ENCODE measurements at regions of chr1 and their contacts with region 1.

Region 1: GRCh38 chr1:28648474-28649198 is at the start of gene RNU11:
- DNase-seq: peak; percentile 72
- ATAC-seq: peak; percentile 65
- H3K4me3 Mint-ChIP-seq: peak within 1 kb of the TSS; percentile 91
- H3K27ac Mint-ChIP-seq: peak within 1 kb of the TSS; percentile 100
- H3K4me1 Mint-ChIP-seq: peaks cover 35% of the 10 kb centered on the region
- H3K27me3 Mint-ChIP-seq: no peaks in the 10 kb centered on the region
- CTCF ChIP-seq: no peak
- total RNA-seq, gene RNU11: not detected in 2 replicates

Region 2: DNA sequence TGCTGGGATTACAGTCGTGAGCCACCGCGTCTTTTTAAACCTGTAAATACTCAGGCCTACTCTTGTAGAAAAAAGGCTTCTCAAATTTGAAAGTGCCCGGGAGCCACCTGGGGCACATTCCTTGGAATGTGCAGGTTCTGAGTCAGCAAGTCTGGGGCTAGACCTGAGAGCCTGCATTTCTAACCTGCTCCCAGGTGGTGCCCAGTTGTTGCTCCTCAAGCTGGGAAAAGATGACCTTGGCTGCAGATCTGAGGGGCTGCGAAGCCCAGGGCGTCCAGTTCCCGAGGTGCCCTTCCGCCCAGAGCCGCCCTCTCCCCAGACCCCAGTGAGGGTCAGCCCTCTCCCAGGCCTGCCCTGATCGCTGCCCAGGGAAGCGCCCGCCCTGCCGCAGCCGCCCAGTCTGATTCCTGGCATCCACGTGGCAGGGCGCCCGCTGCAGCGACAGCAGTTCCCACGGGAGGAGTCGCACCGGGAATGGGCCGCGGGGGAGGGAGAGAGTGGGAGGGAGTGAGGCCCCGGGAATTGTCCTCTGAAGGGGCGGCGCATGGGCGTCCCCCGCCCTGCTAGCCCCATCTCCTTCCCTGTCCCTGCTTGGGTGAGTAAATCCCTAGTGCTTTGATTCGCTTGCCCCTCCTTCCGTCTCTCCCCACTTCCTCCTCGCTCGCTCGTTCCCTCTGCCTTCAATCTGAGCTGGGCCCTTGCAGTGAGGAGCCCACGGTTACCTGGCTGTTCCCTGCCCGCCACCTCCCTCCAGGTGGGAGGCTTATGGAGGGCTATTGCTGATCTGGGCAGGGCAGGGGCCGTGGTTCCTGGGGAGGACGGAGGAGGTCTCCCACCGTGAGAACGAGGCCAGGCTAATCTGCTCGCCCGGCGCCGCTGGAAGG is 1617.2 kb before region 1 on chr1:
- CTCF ChIA-PET with region 1: no interaction called
- POLR2A ChIA-PET with region 1: no interaction called
- intact Hi-C with region 1: no loop called
- DNase-seq: no peak
- ATAC-seq: peak; percentile 10
- H3K4me3 Mint-ChIP-seq: no peak overlapping the region
- H3K27ac Mint-ChIP-seq: no peak overlapping the region
- H3K4me1 Mint-ChIP-seq: peaks cover 2% of the 10 kb centered on the region
- H3K27me3 Mint-ChIP-seq: peaks cover 14% of the 10 kb centered on the region
- CTCF ChIP-seq: no peak

Region 3: GRCh38 chr1:28369371-28370238 is 279.0 kb before region 1 on chr1 and contains the start of gene PHACTR4:
- CTCF ChIA-PET with region 1: no interaction called
- POLR2A ChIA-PET with region 1: interaction called, 11 read pairs
- intact Hi-C with region 1: no loop called
- DNase-seq: peak; percentile 74
- ATAC-seq: peak; percentile 89
- H3K4me3 Mint-ChIP-seq: peak within 1 kb of the TSS; percentile 96
- H3K27ac Mint-ChIP-seq: peak within 1 kb of the TSS; percentile 98
- H3K4me1 Mint-ChIP-seq: peaks cover 21% of the 10 kb centered on the region
- H3K27me3 Mint-ChIP-seq: no peaks in the 10 kb centered on the region
- CTCF ChIP-seq: no peak
- total RNA-seq, gene PHACTR4: 27.2 and 31.5 TPM in 2 replicates

Region 4: GRCh38 chr1:28510665-28511440 is 137.8 kb before region 1 on chr1:
- CTCF ChIA-PET with region 1: no interaction called
- POLR2A ChIA-PET with region 1: interaction called, 59 read pairs
- intact Hi-C with region 1: no loop called
- DNase-seq: no peak
- ATAC-seq: peak; percentile 8
- H3K4me3 Mint-ChIP-seq: peak overlapping the region; percentile 98
- H3K27ac Mint-ChIP-seq: peak overlapping the region; percentile 98
- H3K4me1 Mint-ChIP-seq: peaks cover 44% of the 10 kb centered on the region
- H3K27me3 Mint-ChIP-seq: no peaks in the 10 kb centered on the region
- CTCF ChIP-seq: no peak

Region 5: GRCh38 chr1:28668191-28668955 is 19.7 kb after region 1 on chr1 and contains the start of gene GMEB1:
- CTCF ChIA-PET with region 1: interaction called, 14 read pairs
- POLR2A ChIA-PET with region 1: interaction called, 287 read pairs
- intact Hi-C with region 1: loop called (anchors 1 kb)
- DNase-seq: peak; percentile 73
- ATAC-seq: peak; percentile 65
- H3K4me3 Mint-ChIP-seq: peak within 1 kb of the TSS; percentile 92
- H3K27ac Mint-ChIP-seq: peak within 1 kb of the TSS; percentile 97
- H3K4me1 Mint-ChIP-seq: peaks cover 17% of the 10 kb centered on the region
- H3K27me3 Mint-ChIP-seq: no peaks in the 10 kb centered on the region
- CTCF ChIP-seq: no peak
- total RNA-seq, gene GMEB1: 26.8 and 27.4 TPM in 2 replicates

Region 6: GRCh38 chr1:28736450-28737306 is 88.0 kb after region 1 on chr1 and contains the start of gene YTHDF2:
- CTCF ChIA-PET with region 1: interaction called, 19 read pairs
- POLR2A ChIA-PET with region 1: interaction called, 132 read pairs
- intact Hi-C with region 1: loop called (anchors 1 kb)
- DNase-seq: peak; percentile 96
- ATAC-seq: peak; percentile 93
- H3K4me3 Mint-ChIP-seq: peak within 1 kb of the TSS; percentile 96
- H3K27ac Mint-ChIP-seq: peak within 1 kb of the TSS; percentile 91
- H3K4me1 Mint-ChIP-seq: peaks cover 30% of the 10 kb centered on the region
- H3K27me3 Mint-ChIP-seq: no peaks in the 10 kb centered on the region
- CTCF ChIP-seq: peak; percentile 83
- total RNA-seq, gene YTHDF2: 70.6 and 81.2 TPM in 2 replicates

Region 7: DNA sequence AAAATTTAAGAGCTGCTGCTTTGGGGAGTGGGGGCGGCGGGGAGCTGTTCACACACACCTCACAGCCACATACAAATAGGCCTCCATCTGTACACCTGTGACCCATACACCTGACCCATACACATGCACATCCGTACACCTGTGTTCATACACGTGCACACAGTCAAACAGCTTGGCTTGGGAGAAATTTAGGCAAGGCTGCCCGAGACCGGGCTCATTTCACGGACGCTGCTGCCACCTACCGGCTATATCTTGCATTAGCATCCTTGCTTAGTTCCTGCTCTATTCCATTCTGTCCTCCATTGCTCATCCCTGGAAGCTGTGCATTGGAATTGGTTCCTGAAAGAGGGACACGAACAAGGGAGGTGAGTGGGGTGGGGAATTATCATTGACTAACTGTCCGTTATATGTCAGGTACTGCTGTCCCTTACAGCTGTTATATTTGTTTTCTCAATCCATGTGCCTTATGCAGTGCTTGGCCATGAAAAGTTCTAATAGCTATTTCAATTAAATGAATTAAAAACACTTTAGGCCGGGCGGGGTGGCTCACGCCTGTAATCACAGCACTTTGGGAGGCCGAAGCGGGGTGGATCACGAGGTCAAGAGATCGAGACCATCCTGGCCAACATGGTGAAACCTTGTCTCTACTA is 228.6 kb after region 1 on chr1:
- CTCF ChIA-PET with region 1: interaction called, 14 read pairs
- POLR2A ChIA-PET with region 1: interaction called, 14 read pairs
- intact Hi-C with region 1: loop called (anchors 2 kb)
- DNase-seq: peak; percentile 63
- ATAC-seq: peak; percentile 78
- H3K4me3 Mint-ChIP-seq: no peak overlapping the region
- H3K27ac Mint-ChIP-seq: no peak overlapping the region
- H3K4me1 Mint-ChIP-seq: peaks cover 7% of the 10 kb centered on the region
- H3K27me3 Mint-ChIP-seq: peaks cover 2% of the 10 kb centered on the region
- CTCF ChIP-seq: peak; percentile 88

Measured in activated B cell treated with CpG ODN at 0.5 μM for 24 hours (primary cell).